Activated CD4-positive, alpha-beta memory T cell treated with anti-CD3 and anti-CD28 coated beads, Interleukin-2, amount 10 ng/mL, durations not matched to agents 7 days and 5 days (primary cell): ENCODE measurements at regions of chr4 and their contacts with region 1.

Region 1: GRCh38 chr4:139301113-139301820 is at the start of gene NAA15:
- DNase-seq: peak; percentile 97
- H3K4me3 Mint-ChIP-seq: peak within 1 kb of the TSS; percentile 88
- H3K27ac Mint-ChIP-seq: peak within 1 kb of the TSS; percentile 94
- H3K4me1 Mint-ChIP-seq: peaks cover 58% of the 10 kb centered on the region
- H3K27me3 Mint-ChIP-seq: no peaks in the 10 kb centered on the region
- total RNA-seq, gene NAA15: 45.7 to 52.5 TPM

Region 2: DNA sequence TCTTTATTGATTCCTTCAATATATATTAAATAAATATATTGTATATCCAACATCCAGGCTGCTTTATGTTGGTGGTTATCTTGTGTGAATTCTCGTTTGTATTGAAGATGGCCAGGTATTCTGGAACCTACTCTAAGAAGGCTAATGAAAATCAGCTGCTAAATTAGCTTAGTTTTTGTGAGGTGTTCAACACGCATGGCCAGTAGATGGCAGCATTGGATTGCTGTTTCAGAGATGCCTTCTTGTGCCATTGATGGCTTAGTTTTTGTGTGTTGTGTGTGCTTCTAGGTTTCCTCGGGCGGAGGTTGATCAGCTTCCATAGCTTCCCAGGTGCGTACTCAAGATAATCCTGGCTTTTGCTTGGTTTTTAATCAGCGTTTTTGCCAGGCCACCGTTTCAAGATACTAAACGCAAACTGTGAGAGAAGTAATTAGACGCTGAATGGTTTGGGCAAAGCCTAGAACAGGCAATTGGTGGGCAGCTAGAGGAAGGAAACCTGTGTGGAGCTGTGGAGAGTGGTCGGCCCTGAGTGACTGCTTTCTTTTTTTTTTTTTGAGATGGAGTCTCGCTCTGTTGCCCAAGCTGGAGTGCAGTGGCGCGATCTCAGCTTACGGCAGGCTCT is 270.5 kb before region 1 on chr4:
- CTCF ChIA-PET with region 1: interaction called, 48 read pairs
- POLR2A ChIA-PET with region 1: interaction called, 3 read pairs
- DNase-seq: peak; percentile 80
- H3K4me3 Mint-ChIP-seq: no peak overlapping the region
- H3K27ac Mint-ChIP-seq: no peak overlapping the region
- H3K4me1 Mint-ChIP-seq: peaks cover 5% of the 10 kb centered on the region
- H3K27me3 Mint-ChIP-seq: no peaks in the 10 kb centered on the region

Region 3: DNA sequence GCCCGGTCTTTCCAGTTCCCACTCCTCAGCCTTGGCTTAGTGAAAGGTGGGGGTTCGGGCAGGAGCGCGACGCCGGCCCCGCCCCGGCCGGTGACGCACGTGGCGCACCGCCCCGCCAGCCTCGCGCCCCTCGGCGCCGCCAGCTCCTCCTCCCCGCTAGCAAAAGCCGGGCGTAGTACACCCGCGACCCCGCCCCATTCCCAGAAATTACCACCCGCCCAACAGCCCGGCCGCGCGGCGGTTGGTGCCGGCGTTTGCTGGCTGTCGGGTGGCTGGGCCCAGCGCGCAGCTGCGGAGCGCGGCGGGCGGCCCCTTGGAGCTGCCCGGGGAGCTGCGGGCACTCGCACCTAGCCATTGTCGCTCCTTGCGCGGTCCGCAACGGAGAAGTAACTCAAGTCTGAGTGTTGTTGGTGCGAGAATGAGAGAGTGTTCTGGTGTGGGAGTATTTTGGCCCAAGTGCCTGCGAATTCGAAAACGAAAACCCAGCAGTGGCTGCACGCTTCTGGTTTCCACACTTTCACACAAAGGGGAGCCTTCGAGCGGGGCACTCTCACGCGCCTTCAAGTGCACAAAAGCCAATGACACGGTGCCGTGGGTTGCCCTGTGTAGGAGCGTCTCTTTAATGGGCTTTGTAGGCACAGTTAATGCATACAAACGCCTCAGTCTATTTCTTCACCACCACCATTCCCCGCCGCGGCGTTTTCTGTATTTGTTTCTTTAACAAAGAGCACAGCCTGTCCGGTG is 123.2 kb before region 1 on chr4:
- CTCF ChIA-PET with region 1: interaction called, 14 read pairs
- POLR2A ChIA-PET with region 1: interaction called, 65 read pairs
- DNase-seq: peak; percentile 95
- H3K4me3 Mint-ChIP-seq: peak overlapping the region; percentile 78
- H3K27ac Mint-ChIP-seq: peak overlapping the region; percentile 85
- H3K4me1 Mint-ChIP-seq: peaks cover 21% of the 10 kb centered on the region
- H3K27me3 Mint-ChIP-seq: peaks cover 26% of the 10 kb centered on the region

Region 4: DNA sequence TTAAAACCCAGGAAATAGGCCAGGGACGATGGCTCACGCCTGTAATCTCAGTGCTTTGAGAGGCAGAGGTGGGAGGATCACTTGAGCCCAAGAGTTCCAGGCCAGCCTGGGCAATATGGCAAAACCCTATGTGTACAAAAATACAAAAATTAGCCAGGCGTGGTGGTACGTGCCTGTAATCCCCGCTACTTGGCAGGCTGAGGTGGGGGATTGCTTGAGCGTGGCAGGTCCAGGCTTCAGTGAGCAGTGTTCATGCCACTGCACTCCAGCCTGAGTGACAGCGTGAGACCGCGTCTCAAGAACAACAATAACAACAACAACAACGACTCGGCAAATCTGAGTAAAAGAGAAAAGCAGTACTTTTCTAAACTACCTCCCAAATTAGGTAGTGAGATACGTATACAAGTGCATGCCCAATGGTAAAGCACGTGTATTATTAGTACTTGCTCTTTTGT is 14.0 kb after region 1 on chr4:
- CTCF ChIA-PET with region 1: interaction called, 12 read pairs
- POLR2A ChIA-PET with region 1: interaction called, 25 read pairs
- DNase-seq: no peak
- H3K4me3 Mint-ChIP-seq: no peak overlapping the region
- H3K27ac Mint-ChIP-seq: peak overlapping the region; percentile 61
- H3K4me1 Mint-ChIP-seq: peaks cover 70% of the 10 kb centered on the region
- H3K27me3 Mint-ChIP-seq: no peaks in the 10 kb centered on the region

Region 5: DNA sequence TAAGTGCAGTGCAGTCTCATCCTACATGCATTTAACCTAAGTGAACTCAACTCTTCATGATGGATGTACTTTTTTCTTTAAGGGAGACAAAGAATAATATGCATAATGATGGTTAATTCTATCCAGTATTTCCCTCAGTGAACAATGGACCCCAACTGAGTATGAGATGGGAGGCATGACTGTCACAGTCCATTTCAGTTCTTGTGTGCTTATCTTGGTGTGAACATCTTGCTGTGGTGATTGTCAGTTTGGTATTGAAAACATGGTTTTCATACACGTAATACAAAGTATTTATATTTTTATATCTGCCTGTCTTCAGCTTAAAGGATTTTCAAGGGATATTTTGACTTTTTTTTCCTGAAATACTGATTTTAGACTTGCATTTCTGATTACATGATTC is 73.0 kb after region 1 on chr4:
- CTCF ChIA-PET with region 1: no interaction called
- POLR2A ChIA-PET with region 1: no interaction called
- DNase-seq: no peak
- H3K4me3 Mint-ChIP-seq: no peak overlapping the region
- H3K27ac Mint-ChIP-seq: no peak overlapping the region
- H3K4me1 Mint-ChIP-seq: no peaks in the 10 kb centered on the region
- H3K27me3 Mint-ChIP-seq: no peaks in the 10 kb centered on the region

Region 6: GRCh38 chr4:139461022-139461628 is 159.9 kb after region 1 on chr4:
- CTCF ChIA-PET with region 1: no interaction called
- POLR2A ChIA-PET with region 1: no interaction called
- DNase-seq: no peak
- H3K4me3 Mint-ChIP-seq: no peak overlapping the region
- H3K27ac Mint-ChIP-seq: no peak overlapping the region
- H3K4me1 Mint-ChIP-seq: peaks cover 34% of the 10 kb centered on the region
- H3K27me3 Mint-ChIP-seq: no peaks in the 10 kb centered on the region

Region 7: GRCh38 chr4:139554893-139555704 is 253.8 kb after region 1 on chr4:
- CTCF ChIA-PET with region 1: interaction called, 4 read pairs
- POLR2A ChIA-PET with region 1: interaction called, 19 read pairs
- DNase-seq: peak; percentile 85
- H3K4me3 Mint-ChIP-seq: peak overlapping the region; percentile 98
- H3K27ac Mint-ChIP-seq: peak overlapping the region; percentile 94
- H3K4me1 Mint-ChIP-seq: peaks cover 60% of the 10 kb centered on the region
- H3K27me3 Mint-ChIP-seq: no peaks in the 10 kb centered on the region